OCI-LY7 (cell line): ENCODE measurements at regions of chr11 and their contacts with region 1.

Region 1: GRCh38 chr11:62787005-62787759 is at the start of gene TMEM179B:
- DNase-seq: peak; percentile 99
- H3K4me3 ChIP-seq: peak within 1 kb of the TSS; percentile 97
- H3K27ac ChIP-seq: peak within 1 kb of the TSS; percentile 79
- H3K4me1 ChIP-seq: peaks cover 37% of the 10 kb centered on the region
- CTCF ChIP-seq: peak; percentile 33; the same call in 1 of the 2 replicates
- total RNA-seq, gene TMEM179B: 22.8 and 33.1 TPM in 2 replicates

Region 2: DNA sequence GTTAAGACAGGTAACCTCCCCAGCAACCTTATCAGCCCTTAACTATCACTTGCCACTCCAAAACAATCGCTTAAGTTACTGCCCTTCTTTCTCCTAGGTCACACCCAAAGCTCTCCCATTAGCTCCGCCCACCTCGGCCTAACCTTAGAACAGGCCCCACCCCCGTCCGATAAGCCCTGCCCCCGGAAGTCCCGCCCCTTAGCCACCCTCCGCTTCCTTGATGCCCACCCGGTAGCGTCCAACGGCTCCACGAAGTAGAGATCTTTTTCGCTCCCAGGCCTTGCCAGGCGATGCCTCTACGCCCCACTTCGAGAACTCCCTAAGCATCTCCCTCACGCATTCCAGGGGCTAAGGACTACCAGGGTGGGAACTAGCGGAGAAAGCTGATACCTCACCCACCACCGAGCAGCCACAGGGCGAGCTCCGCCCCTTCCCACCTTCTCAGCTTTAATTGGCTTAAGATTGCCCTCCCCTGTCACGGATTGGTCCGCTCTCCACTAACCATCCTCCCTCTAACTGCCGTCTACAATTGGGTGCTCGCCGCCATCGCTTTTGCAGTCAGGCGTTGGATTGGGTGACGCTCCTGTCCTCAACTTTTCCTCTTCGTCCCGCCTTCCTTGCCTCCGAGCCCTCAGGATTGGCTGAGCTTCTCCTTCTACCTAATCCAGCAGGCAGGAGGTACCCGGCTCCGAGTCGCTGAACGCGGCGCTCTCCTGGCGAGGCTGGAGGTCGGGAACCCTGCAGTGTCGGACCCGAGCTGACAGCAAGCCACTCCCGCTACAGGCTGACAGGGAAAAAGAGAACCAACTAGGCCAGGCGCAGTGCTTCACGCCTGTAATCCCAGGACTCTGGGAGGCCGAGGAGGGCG is 33.2 kb before region 1 on chr11 and contains the start of gene ZBTB3:
- CTCF ChIA-PET with region 1: interaction called, 3 read pairs
- POLR2A ChIA-PET with region 1: interaction called, 10 read pairs
- intact Hi-C with region 1: no loop called
- DNase-seq: peak; percentile 99
- H3K4me3 ChIP-seq: peak within 1 kb of the TSS; percentile 71
- H3K27ac ChIP-seq: peak within 1 kb of the TSS; percentile 60
- H3K4me1 ChIP-seq: peaks cover 20% of the 10 kb centered on the region
- CTCF ChIP-seq: no peak
- total RNA-seq, gene ZBTB3: 11.1 and 11.8 TPM in 2 replicates

Region 3: DNA sequence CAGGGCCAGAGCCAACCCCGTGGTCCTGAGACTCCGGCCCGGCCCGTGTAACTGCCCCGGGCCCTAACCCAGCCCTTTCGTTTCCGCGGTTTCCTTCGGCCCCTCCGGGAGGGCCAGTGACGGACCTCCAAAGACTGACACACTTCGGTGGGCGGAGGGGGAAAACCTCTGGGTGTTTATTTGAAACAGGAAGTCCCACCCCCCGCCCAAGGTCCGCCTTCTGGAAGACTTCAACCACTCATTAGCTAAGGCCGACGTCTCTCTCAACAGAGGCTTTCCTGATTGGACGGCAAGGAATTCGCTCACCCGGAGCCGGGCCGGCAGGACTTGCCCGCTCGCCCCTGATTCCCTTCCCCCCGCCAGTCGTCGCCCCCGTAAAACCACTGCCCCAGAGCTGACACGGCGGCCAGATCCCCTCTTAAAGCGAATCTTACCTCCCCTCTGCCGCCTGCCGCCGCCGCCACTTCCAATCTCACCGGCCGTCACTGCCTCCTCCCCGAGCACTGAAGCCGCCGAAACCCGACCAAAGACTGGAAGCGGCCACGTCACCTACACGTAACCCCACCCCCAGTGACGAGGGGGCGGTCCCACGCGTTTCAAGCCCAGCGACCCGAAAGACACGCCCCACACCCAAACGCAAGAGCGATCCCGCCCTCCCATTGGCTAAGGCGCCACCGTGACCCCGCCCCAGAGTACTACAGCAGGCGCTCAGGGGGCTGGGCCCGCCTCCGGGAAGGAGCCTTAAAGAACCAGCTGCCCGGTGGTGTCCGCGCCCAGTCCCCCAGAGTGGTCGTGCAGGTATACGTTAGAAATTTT is 44.5 kb after region 1 on chr11 and contains the start of gene STX5:
- CTCF ChIA-PET with region 1: no interaction called
- POLR2A ChIA-PET with region 1: interaction called, 3 read pairs
- intact Hi-C with region 1: loop called (anchors 2 kb)
- DNase-seq: peak; percentile 99
- H3K4me3 ChIP-seq: peak within 1 kb of the TSS; percentile 97
- H3K27ac ChIP-seq: peak within 1 kb of the TSS; percentile 71
- H3K4me1 ChIP-seq: peaks cover 16% of the 10 kb centered on the region
- CTCF ChIP-seq: no peak
- total RNA-seq, gene STX5: 21.7 and 30.6 TPM in 2 replicates

Region 4: GRCh38 chr11:62880803-62881578 is 93.8 kb after region 1 on chr11 and contains the start of gene SLC3A2:
- CTCF ChIA-PET with region 1: no interaction called
- POLR2A ChIA-PET with region 1: no interaction called
- intact Hi-C with region 1: loop called (anchors 1 kb)
- DNase-seq: peak; percentile 89
- H3K4me3 ChIP-seq: peak within 1 kb of the TSS; percentile 73
- H3K27ac ChIP-seq: peak within 1 kb of the TSS; percentile 74
- H3K4me1 ChIP-seq: peaks cover 28% of the 10 kb centered on the region
- CTCF ChIP-seq: peak; percentile 78
- total RNA-seq, gene SLC3A2: 289 and 291 TPM in 2 replicates

Region 5: DNA sequence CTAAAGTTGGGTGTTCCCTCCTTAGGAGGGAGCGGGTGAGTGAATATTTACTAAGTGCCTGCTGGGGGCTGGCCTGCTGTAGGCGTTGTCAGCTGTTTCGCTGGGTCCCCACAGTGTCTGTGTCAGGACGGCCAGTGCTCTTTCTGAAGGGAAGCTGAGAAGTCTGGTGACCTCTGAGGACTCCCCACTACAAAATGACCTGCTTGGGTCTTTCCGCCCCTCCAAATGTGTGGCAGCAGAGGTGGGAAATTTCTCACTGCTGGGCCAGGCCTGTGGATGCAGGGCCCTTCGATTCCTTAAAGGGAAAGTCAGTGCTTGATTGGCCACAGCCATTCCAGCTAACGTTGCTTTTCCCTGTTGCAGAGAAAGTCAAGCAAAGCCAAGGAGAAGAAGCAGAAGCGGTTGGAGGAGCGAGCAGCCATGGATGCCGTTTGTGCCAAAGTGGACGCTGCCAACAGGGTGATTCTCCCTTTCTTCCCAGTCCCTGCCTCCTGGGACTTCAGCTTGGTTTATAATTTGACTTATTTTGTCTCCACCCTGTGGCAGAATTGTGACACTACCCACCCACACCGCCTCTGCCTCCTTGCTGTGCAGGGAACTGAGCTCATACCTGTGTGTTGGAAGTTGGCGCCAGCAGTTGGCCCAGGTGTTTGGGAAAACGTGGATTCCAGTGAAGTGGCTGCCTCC is 1158.4 kb after region 1 on chr11:
- CTCF ChIA-PET with region 1: no interaction called
- POLR2A ChIA-PET with region 1: no interaction called
- intact Hi-C with region 1: no loop called
- DNase-seq: peak; percentile 62
- H3K4me3 ChIP-seq: no peak overlapping the region
- H3K27ac ChIP-seq: no peak overlapping the region
- H3K4me1 ChIP-seq: peaks cover 6% of the 10 kb centered on the region
- CTCF ChIP-seq: peak; percentile 83